GM23248 (cell line): ENCODE measurements at regions of chr16 and their contacts with region 1.

Region 1: DNA sequence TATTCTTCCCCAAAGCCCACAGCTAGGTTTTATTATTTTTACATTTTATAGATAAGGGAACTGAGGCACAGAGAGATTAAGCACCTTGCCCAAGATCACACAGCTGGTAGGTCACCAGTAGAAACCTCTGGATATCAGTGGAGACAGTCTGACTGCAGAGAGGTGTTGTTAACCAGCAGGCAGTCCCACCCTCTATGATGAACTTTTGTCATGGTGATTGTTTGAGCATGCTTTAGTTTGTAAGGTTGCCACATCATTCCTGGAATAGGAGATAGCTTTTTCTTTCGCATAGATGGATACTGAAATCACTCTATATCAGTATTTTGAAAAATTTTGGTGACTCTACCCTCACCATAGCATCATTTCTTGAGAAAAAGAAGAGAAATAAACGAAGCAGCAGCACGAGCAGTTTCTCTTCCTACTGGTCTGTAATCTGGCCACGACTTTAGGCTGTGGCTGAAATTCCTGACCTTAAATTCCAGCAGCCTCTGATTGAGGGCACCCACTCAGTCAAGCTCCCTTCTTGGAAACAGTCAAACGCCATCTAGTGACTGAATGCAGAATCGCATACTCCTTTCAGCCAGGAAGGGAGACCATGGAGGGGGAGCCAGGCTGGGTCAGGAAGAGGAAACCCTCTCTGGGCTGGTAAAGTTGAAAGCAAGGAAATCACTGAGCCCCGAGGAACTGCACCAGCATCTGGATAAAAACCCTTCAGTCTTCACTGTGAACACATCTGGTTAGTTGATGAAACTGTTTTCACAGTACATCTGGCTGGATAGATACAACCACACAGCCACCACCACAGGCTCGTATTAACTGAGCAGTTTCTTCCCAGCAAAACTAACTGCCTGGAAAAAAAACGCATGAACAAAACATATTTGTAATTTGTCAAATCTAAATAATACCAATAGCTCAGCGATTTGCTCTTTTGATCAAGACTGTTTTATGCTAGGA is 108.4 kb upstream of the XYLT1 start:
- DNase-seq: peak; percentile 82
- H3K4me3 ChIP-seq: peak overlapping the region; percentile 56
- H3K27ac ChIP-seq: peak overlapping the region; percentile 60
- H3K4me1 ChIP-seq: peaks cover 10% of the 10 kb centered on the region
- H3K27me3 ChIP-seq: 0 out of 2 replicates have a peak, but pooled peaks cover 8% of the 10 kb centered on the region

Region 2: GRCh38 chr16:16881814-16882213 is 697.4 kb before region 1 on chr16:
- in situ Hi-C with region 1: no loop called
- DNase-seq: no peak
- H3K4me3 ChIP-seq: no peak overlapping the region
- H3K27ac ChIP-seq: no peak overlapping the region
- H3K4me1 ChIP-seq: no peaks in the 10 kb centered on the region
- H3K27me3 ChIP-seq: no peaks in the 10 kb centered on the region

Region 3: GRCh38 chr16:17343028-17343427 is 236.2 kb before region 1 on chr16:
- in situ Hi-C with region 1: no loop called
- DNase-seq: no peak
- H3K4me3 ChIP-seq: no peak overlapping the region
- H3K27ac ChIP-seq: no peak overlapping the region
- H3K4me1 ChIP-seq: peaks cover 21% of the 10 kb centered on the region
- H3K27me3 ChIP-seq: no peaks in the 10 kb centered on the region

Region 4: GRCh38 chr16:17476414-17477270 is 102.6 kb before region 1 on chr16:
- in situ Hi-C with region 1: loop called (anchors 25 kb)
- DNase-seq: peak; percentile 85
- H3K4me3 ChIP-seq: no peak overlapping the region
- H3K27ac ChIP-seq: no peak overlapping the region
- H3K4me1 ChIP-seq: peaks cover 13% of the 10 kb centered on the region
- H3K27me3 ChIP-seq: no peaks in the 10 kb centered on the region